Activated CD4-positive, alpha-beta T cell treated with anti-CD3 and anti-CD28 coated beads, Interleukin-2, amount 10 ng/mL, durations not matched to agents 24 days and 14 days (primary cell): ENCODE measurements at regions of chr9 and their contacts with region 1.

Region 1: GRCh38 chr9:105359892-105360291 is 87.9 kb upstream of the FSD1L start:
- DNase-seq: peak; percentile 70
- H3K4me3 Mint-ChIP-seq: no peak overlapping the region
- H3K27ac Mint-ChIP-seq: peak overlapping the region; percentile 25
- H3K4me1 Mint-ChIP-seq: peaks cover 19% of the 10 kb centered on the region
- H3K27me3 Mint-ChIP-seq: peaks cover 7% of the 10 kb centered on the region

Region 2: DNA sequence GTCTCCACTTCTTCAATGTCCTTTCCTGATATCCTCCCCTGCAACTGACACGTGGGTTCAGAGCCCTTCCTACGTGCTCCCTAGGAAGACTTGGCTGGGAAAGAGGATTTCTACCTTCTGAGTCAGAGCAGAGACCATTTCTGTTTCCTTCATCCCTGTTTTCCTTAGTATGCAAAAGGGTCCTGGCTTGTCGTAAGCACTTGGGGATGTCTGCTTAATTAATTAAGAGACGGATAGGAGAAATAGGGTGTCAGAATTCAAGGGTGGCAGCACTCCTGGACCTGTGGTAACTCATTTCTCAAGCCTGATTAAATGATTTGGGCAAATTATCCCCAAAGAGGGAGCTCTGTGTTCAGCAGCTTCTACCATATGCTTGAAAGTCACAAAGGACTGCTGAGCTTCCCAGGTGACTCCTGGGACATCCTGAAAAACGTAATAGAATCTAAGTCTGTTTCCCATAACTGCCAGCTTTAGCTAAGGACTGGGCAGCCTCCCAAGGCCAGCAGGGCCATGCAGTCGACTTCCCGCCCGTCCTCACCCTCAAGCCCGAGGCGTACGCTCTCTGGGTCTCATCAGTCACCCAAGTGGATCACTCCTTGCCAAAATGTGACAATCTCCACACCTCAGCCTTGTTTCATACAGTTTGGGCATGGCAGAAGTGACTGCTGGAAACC is 452.5 kb before region 1 on chr9:
- intact Hi-C with region 1: no loop called
- DNase-seq: no peak
- H3K4me3 Mint-ChIP-seq: no peak overlapping the region
- H3K27ac Mint-ChIP-seq: no peak overlapping the region
- H3K4me1 Mint-ChIP-seq: no peaks in the 10 kb centered on the region
- H3K27me3 Mint-ChIP-seq: peaks cover 4% of the 10 kb centered on the region

Region 3: GRCh38 chr9:105299190-105299854 is 60.6 kb before region 1 on chr9:
- intact Hi-C with region 1: loop called (anchors 5 kb)
- DNase-seq: no peak
- H3K4me3 Mint-ChIP-seq: no peak overlapping the region
- H3K27ac Mint-ChIP-seq: peak overlapping the region; percentile 42
- H3K4me1 Mint-ChIP-seq: peaks cover 22% of the 10 kb centered on the region
- H3K27me3 Mint-ChIP-seq: peaks cover 1% of the 10 kb centered on the region

Region 4: GRCh38 chr9:105341434-105342144 is 18.3 kb before region 1 on chr9:
- intact Hi-C with region 1: loop called (anchors 2 kb)
- DNase-seq: no peak
- H3K4me3 Mint-ChIP-seq: peak overlapping the region; percentile 5
- H3K27ac Mint-ChIP-seq: no peak overlapping the region
- H3K4me1 Mint-ChIP-seq: peaks cover 20% of the 10 kb centered on the region
- H3K27me3 Mint-ChIP-seq: peaks cover 3% of the 10 kb centered on the region

Region 5: GRCh38 chr9:105385381-105385985 is 25.6 kb after region 1 on chr9:
- intact Hi-C with region 1: loop called (anchors 2 kb)
- DNase-seq: peak; percentile 83
- H3K4me3 Mint-ChIP-seq: peak overlapping the region; percentile 91
- H3K27ac Mint-ChIP-seq: peak overlapping the region; percentile 80
- H3K4me1 Mint-ChIP-seq: peaks cover 16% of the 10 kb centered on the region
- H3K27me3 Mint-ChIP-seq: peaks cover 13% of the 10 kb centered on the region

Region 6: DNA sequence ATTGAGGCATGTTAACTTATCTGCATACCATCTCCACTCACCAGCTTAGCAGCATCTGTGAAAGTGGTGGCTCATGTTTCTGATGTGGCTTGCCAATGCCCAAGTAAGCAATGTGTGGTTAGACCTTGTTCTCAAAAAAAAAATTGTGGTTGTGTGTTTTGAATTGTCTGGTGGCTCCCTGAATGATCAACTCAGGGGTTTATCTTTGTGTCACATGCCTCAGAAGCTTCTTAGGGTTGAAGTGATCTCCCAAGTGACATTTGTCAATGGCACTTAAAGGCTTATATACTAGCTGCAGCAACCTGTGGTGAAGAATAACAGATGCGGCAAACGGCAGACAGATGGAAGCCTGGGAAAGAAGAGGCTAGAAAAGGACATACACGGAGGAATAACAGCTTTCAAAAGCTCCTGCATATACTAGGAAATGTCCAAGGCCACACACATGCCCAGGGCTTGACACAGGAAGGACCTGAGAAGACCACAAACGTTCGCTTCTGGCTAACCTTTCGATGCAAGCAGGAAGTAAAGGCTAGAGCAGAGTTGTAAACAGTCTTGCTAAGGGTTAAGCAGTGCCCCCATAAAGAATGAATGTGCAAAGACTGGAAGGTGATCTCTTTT is 45.7 kb after region 1 on chr9:
- intact Hi-C with region 1: loop called (anchors 1 kb)
- DNase-seq: peak; percentile 90
- H3K4me3 Mint-ChIP-seq: peak overlapping the region; percentile 65
- H3K27ac Mint-ChIP-seq: peak overlapping the region; percentile 80
- H3K4me1 Mint-ChIP-seq: peaks cover 28% of the 10 kb centered on the region
- H3K27me3 Mint-ChIP-seq: peaks cover 73% of the 10 kb centered on the region

Region 7: DNA sequence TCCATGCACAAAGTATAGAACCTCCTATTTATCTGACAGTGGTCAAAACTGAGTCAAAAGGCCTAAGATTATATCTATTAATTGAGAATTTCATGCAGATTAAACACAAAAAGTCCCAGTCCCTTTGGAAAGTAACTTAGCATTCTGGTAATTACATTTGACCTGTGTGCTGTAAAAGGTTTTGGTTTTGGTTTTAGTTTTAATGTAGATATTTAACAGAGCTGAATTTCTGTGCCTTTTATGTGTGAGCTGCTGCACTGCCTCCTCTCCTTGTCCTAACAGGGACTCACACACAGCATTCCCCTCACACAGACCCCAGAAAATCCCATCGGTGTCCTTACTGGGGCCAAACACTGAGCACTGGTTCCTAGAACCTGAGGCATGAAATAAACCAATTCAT is 56.9 kb after region 1 on chr9:
- intact Hi-C with region 1: no loop called
- DNase-seq: no peak
- H3K4me3 Mint-ChIP-seq: no peak overlapping the region
- H3K27ac Mint-ChIP-seq: no peak overlapping the region
- H3K4me1 Mint-ChIP-seq: peaks cover 11% of the 10 kb centered on the region
- H3K27me3 Mint-ChIP-seq: peaks cover 25% of the 10 kb centered on the region